Tibial artery (tissue), 4 donors: ENCODE measurements at regions of chr18 and their contacts with region 1.

Region 1: DNA sequence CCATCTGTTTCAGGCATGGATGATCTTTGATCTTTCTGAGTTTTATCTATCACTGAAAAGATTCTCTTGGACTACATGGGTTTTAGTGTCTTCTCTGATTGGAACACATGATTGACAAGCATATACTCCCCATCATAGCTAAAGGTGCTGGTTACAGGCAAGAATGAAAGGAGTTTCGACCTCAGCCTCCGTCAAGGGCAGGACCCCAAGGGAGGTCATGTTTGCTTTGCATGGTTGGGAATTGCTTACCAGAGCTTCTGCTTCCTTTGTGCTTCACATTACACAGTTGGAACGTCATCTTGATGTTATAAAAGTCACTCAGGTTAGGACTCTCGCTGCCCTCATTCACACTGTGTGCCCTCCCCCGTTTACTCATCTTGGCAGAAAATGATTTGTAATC is 287.7 kb downstream of the PIK3C3 start:
- DNase-seq: no peak
- H3K4me3 ChIP-seq: no peak overlapping the region
- H3K27ac ChIP-seq: no peak overlapping the region
- H3K4me1 ChIP-seq: peaks cover 0 to 10% (median 0%) of the 10 kb centered on the region in 4 donors
- H3K27me3 ChIP-seq: no peaks in the 10 kb centered on the region
- CTCF ChIP-seq: no peak

Region 2: GRCh38 chr18:42281851-42282250 is 39.1 kb after region 1 on chr18:
- intact Hi-C with region 1: loop called (anchors 2 kb)
- DNase-seq: no peak
- H3K4me3 ChIP-seq: no peak overlapping the region
- H3K27ac ChIP-seq: no peak overlapping the region
- H3K4me1 ChIP-seq: no peaks in the 10 kb centered on the region
- H3K27me3 ChIP-seq: no peaks in the 10 kb centered on the region
- CTCF ChIP-seq: no peak